GM12878 (cell line): ENCODE measurements at regions of chr3 and their contacts with region 1.

Region 1: DNA sequence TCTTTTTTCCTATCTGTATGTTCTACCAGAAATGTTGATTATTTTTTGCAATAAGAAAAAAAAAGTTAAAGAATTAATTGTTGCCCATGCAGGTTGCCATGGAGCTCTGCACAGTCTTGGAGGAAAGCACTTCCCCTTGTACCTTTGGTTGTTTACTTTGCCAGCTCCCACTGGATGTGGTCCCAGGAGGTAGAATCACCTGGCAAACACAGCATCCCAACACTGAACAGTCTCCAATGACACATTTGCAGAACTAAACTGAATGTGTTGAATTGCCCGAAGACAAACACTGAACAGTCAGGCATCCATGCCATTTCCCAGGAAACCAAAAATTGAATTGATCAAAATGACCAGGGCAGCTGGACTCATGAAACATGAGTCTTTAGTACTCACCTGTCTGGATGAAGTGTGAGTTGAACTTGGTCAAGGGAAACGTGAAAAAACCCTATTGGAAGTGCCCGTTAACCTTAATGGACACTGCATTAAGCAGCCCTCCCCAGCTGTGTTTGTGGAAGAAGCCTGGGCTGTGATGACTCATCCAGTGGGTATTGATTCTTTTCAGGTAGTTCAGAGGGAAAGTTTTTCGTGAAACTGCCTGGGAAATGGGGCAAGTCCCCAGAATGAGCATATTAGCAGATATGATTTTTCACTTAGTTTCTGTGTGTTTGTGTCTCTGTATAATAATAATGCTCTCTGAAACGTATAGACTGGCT is 284.7 kb upstream of the STT3B start:
- DNase-seq: peak; percentile 77
- ATAC-seq: peak; percentile 60
- H3K4me3 ChIP-seq: peak overlapping the region; percentile 47; the same call in 1 of the 2 replicates
- H3K27ac ChIP-seq: peak overlapping the region; percentile 86
- H3K4me1 ChIP-seq: peaks cover 40% of the 10 kb centered on the region
- H3K27me3 ChIP-seq: no peaks in the 10 kb centered on the region
- CTCF ChIP-seq: no peak
- EP300 ChIP-seq: peak in 1 of 2 experiments; percentile 74; a peak in 1 of 4 replicates
- POLR2A ChIP-seq: no peak
- RAD21 ChIP-seq: no peak

Region 2: DNA sequence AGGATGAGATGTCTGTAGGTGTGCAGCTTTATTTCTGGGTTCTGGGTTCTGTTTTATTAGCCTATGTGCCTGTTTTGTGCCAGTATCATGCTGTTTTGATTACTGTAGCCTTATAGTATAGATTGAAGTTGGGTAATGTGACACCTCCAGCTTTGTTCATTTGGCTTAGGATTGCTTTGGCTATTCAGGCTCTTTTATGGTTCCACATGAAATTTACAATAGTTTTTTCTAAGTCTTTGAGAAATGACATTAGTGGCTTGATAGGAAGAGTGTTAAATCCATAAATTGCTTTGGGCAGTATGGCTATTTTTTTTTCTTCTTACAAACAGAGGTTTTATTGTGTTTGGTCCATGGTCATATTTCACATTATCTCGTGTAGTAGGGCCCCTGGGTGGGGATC is 67.7 kb before region 1 on chr3:
- CTCF ChIA-PET with region 1: no interaction called
- POLR2A ChIA-PET with region 1: no interaction called
- RAD21 ChIA-PET with region 1: no interaction called
- SMC1A ChIA-PET with region 1: no interaction called
- in situ Hi-C with region 1: no loop called
- intact Hi-C with region 1: no loop called
- DNase-seq: no peak
- ATAC-seq: no peak
- H3K4me3 ChIP-seq: no peak overlapping the region
- H3K27ac ChIP-seq: no peak overlapping the region
- H3K4me1 ChIP-seq: no peaks in the 10 kb centered on the region
- H3K27me3 ChIP-seq: no peaks in the 10 kb centered on the region
- CTCF ChIP-seq: no peak
- EP300 ChIP-seq: no peak
- POLR2A ChIP-seq: no peak
- RAD21 ChIP-seq: no peak

Region 3: DNA sequence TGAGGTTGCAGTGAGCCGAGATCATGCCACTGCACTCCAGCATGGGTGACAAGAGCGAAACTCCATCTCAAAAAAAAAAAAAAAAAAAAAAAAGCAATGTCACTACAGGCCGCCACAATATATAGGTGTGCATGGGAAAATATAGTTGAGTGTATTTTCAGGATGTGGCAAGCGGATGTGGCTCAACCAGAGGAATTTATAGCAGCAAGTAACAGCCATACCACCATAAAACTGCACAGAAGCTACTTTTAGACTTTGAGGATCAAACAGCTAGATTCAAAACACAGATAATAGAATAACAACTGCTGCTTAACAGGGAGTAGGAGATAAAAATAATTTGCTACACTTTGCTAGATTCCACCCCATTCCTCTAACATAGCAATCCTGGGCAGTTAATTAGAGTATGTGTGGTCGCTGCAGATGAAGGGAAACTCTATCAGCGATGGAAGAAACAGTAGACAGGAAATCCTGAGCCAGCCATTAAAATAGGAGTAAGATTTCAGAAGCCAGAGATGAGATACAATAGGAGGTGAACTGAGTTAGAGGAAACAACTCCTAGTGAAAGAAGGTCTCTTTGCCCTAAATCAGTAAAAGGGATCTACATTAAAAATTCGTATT is 34.0 kb before region 1 on chr3:
- CTCF ChIA-PET with region 1: interaction called, 7 read pairs
- POLR2A ChIA-PET with region 1: interaction called, 11 read pairs
- RAD21 ChIA-PET with region 1: interaction called, 381 read pairs
- SMC1A ChIA-PET with region 1: interaction called, 50 read pairs
- in situ Hi-C with region 1: no loop called
- intact Hi-C with region 1: loop called (anchors 2 kb)
- DNase-seq: peak; percentile 79
- ATAC-seq: peak; percentile 77
- H3K4me3 ChIP-seq: peak overlapping the region; percentile 40; the same call in 1 of the 2 replicates
- H3K27ac ChIP-seq: peak overlapping the region; percentile 67
- H3K4me1 ChIP-seq: peaks cover 31% of the 10 kb centered on the region
- H3K27me3 ChIP-seq: no peaks in the 10 kb centered on the region
- CTCF ChIP-seq: no peak
- EP300 ChIP-seq: peak; percentile 25 to 67; a peak in 2 of 4 replicates
- POLR2A ChIP-seq: no peak
- RAD21 ChIP-seq: no peak

Region 4: GRCh38 chr3:31227131-31227562 is 20.9 kb before region 1 on chr3:
- CTCF ChIA-PET with region 1: interaction called, 24 read pairs
- POLR2A ChIA-PET with region 1: interaction called, 109 read pairs
- RAD21 ChIA-PET with region 1: interaction called, 381 read pairs
- SMC1A ChIA-PET with region 1: interaction called, 378 read pairs
- in situ Hi-C with region 1: no loop called
- intact Hi-C with region 1: loop called (anchors 2 kb)
- DNase-seq: peak; percentile 80
- ATAC-seq: peak; percentile 80
- H3K4me3 ChIP-seq: no peak overlapping the region
- H3K27ac ChIP-seq: peak overlapping the region; percentile 44
- H3K4me1 ChIP-seq: peaks cover 45% of the 10 kb centered on the region
- H3K27me3 ChIP-seq: no peaks in the 10 kb centered on the region
- CTCF ChIP-seq: no peak
- EP300 ChIP-seq: peak in 1 of 2 experiments; percentile 75; a peak in 2 of 4 replicates
- POLR2A ChIP-seq: no peak
- RAD21 ChIP-seq: no peak

Region 5: DNA sequence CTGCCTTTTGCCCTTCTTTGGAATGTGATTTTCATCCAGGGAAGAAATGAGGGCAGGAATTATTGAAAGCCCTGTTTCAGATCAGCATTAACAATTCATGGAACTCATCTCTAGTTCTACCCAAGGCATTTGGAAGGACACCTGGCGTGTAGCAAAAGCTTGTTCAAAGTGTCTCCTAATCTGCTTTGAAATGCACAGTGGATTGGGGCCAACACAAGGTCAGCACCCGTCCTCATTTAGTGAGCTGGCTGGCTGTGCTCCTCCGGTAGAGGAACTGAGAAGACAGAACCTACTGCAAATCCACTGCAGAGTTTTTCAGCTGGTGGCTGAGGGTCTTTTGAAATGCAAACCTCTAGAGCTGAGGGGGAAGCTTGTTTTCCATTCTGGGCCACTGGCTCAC is 143.1 kb after region 1 on chr3:
- CTCF ChIA-PET with region 1: no interaction called
- POLR2A ChIA-PET with region 1: interaction called, 4 read pairs
- RAD21 ChIA-PET with region 1: interaction called, 17 read pairs
- SMC1A ChIA-PET with region 1: interaction called, 6 read pairs
- in situ Hi-C with region 1: no loop called
- intact Hi-C with region 1: loop called (anchors 5 kb)
- DNase-seq: no peak
- ATAC-seq: peak; percentile 81
- H3K4me3 ChIP-seq: no peak overlapping the region
- H3K27ac ChIP-seq: peak overlapping the region; percentile 35; the same call in 1 of the 2 replicates
- H3K4me1 ChIP-seq: peaks cover 34% of the 10 kb centered on the region
- H3K27me3 ChIP-seq: no peaks in the 10 kb centered on the region
- CTCF ChIP-seq: no peak
- EP300 ChIP-seq: no peak
- POLR2A ChIP-seq: no peak
- RAD21 ChIP-seq: 0 out of 2 replicates have a peak, but pooled peaks have one; percentile 4

Region 6: GRCh38 chr3:31462050-31462569 is 214.1 kb after region 1 on chr3:
- CTCF ChIA-PET with region 1: interaction called, 4 read pairs
- POLR2A ChIA-PET with region 1: interaction called, 4 read pairs
- RAD21 ChIA-PET with region 1: interaction called, 16 read pairs
- SMC1A ChIA-PET with region 1: interaction called, 7 read pairs
- in situ Hi-C with region 1: no loop called
- intact Hi-C with region 1: no loop called
- DNase-seq: peak; percentile 64
- ATAC-seq: peak; percentile 97
- H3K4me3 ChIP-seq: peak overlapping the region; percentile 7; the same call in 1 of the 2 replicates
- H3K27ac ChIP-seq: peak overlapping the region; percentile 9
- H3K4me1 ChIP-seq: peaks cover 13% of the 10 kb centered on the region
- H3K27me3 ChIP-seq: no peaks in the 10 kb centered on the region
- CTCF ChIP-seq: peak; percentile 4 to 40 (median 37); a peak in 3 of 6 replicates
- EP300 ChIP-seq: 0 out of 4 replicates have a peak, but pooled peaks have one; percentile 23 to 33
- POLR2A ChIP-seq: no peak
- RAD21 ChIP-seq: peak; percentile 35